H1 (cell line): ENCODE measurements at regions of chr2 and their contacts with region 1.

Region 1: DNA sequence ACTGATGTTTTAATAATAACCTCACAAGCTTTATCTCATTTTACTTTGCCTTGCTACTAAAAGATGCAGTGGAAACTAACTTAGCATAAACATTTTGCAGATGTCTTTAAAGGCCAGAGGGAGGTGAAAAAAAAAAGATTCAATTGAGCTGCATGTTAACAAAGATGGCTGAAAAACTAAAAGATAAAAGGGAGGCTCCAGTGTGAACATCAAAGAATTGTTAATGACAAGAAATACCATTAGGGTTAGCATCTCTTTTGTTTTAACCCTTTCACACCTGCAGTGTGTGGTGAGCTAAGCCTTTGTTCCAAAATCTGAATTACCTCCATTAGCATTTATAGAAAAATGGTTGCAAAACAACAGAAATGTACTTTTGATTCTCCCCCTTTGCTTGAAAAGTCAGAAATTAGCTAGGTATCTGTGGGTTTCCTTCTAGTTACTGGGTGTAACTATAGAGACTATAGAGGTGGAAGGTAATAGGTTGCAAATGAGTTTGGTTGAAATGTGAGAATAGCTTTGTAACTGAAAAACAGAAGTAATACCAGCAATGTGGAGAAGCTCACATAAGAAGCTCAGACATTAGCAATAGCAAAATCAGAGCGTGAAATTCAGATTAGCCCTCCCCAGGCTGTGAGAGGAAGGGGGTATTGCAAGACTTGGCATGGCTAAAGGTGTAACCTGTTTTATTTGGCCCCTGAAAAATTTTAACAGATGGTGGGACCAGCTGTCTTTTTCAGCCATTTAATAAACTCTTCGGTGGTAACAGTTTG is 34.8 kb upstream of the SP5 start:
- DNase-seq: no peak
- H3K4me3 ChIP-seq: peak overlapping the region in 1 of 4 experiments; percentile 35; a peak in 1 of 8 replicates
- H3K27ac ChIP-seq: no peak overlapping the region
- H3K4me1 ChIP-seq: peaks cover 0 to 9% (median 5%) of the 10 kb centered on the region in 4 experiments; a peak in 4 of 7 replicates
- H3K27me3 ChIP-seq: no peaks in the 10 kb centered on the region
- CTCF ChIP-seq: no peak
- EP300 ChIP-seq: peak in 1 of 2 experiments; percentile 38; a peak in 1 of 3 replicates
- POLR2A ChIP-seq: no peak
- RAD21 ChIP-seq: no peak

Region 2: DNA sequence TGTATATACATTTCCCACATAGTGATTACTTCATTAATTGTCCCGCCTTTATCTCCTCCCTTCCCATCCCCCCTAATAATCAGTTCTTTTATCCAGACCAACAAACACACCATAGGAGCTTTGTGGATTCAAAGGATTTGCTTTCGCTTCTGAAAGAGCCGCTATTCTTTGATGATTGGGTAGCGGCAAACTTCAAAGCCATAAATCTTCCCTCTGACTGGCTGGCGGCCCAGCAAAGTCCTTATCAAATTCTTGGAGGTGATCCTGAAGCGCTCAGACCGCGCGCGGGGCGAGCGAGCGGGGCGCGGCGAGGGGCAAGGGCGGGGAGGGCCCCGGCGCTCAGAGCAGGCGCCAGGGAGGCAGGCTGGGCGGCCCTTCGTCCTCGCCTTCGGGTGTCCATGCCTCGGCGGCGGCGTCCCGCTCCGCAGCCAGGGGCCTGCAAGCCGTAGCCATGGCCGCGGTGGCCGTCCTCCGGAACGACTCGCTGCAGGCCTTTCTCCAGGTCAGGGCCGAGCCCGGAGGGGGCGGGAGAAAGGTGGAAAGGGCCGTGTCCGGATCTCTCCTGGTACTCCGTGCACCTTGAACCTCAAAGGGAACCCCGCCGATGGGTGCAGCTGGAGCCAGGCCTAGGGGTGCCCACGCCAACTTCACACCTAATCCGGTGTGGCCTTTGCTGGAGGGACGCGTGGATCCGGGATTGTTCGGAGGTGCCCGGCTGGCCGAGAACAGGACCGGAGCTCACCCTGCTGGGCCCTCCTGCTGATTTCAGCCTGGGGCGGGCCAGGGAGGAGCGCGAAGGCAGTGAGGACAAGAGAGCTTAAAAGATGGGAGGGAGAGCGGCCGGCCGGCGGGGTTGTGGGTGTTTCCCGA is 34.9 kb after region 1 on chr2 and contains the start of gene SP5:
- CTCF ChIA-PET with region 1: interaction called, 14 read pairs
- POLR2A ChIA-PET with region 1: no interaction called
- DNase-seq: peak; percentile 46 to 83
- H3K4me3 ChIP-seq: peak within 1 kb of the TSS; percentile 12 to 55 (median 28)
- H3K27ac ChIP-seq: no peak within 1 kb of the TSS
- H3K4me1 ChIP-seq: peaks cover 5 to 50% (median 26%) of the 10 kb centered on the region in 4 experiments
- H3K27me3 ChIP-seq: peaks cover 66 to 98% (median 93%) of the 10 kb centered on the region in 4 experiments
- CTCF ChIP-seq: no peak
- EP300 ChIP-seq: no peak
- POLR2A ChIP-seq: no peak
- RAD21 ChIP-seq: no peak
- total RNA-seq, gene SP5: 0.31 TPM in 1 of 2 replicates, not detected in the other